Activated CD4-positive, alpha-beta memory T cell treated with anti-CD3 and anti-CD28 coated beads for 36 hours (primary cell): ENCODE measurements at regions of chr10 and their contacts with region 1.

Region 1: GRCh38 chr10:11170993-11171851 is 153.6 kb downstream of the CELF2 start:
- DNase-seq: peak; percentile 83
- H3K4me3 Mint-ChIP-seq: no peak overlapping the region
- H3K27ac Mint-ChIP-seq: no peak overlapping the region
- H3K4me1 Mint-ChIP-seq: peaks cover 39% of the 10 kb centered on the region
- H3K27me3 Mint-ChIP-seq: no peaks in the 10 kb centered on the region

Region 2: GRCh38 chr10:10946801-10947200 is 224.4 kb before region 1 on chr10:
- CTCF ChIA-PET with region 1: no interaction called
- POLR2A ChIA-PET with region 1: no interaction called
- intact Hi-C with region 1: no loop called
- DNase-seq: no peak
- H3K4me3 Mint-ChIP-seq: no peak overlapping the region
- H3K27ac Mint-ChIP-seq: no peak overlapping the region
- H3K4me1 Mint-ChIP-seq: no peaks in the 10 kb centered on the region
- H3K27me3 Mint-ChIP-seq: peaks cover 24% of the 10 kb centered on the region

Region 3: GRCh38 chr10:11113156-11113555 is 58.1 kb before region 1 on chr10:
- CTCF ChIA-PET with region 1: interaction called, 4 read pairs
- POLR2A ChIA-PET with region 1: no interaction called
- intact Hi-C with region 1: loop called (anchors 2 kb)
- DNase-seq: peak; percentile 19
- H3K4me3 Mint-ChIP-seq: no peak overlapping the region
- H3K27ac Mint-ChIP-seq: peak overlapping the region; percentile 10
- H3K4me1 Mint-ChIP-seq: peaks cover 20% of the 10 kb centered on the region
- H3K27me3 Mint-ChIP-seq: no peaks in the 10 kb centered on the region

Region 4: GRCh38 chr10:11218395-11218794 is 47.2 kb after region 1 on chr10:
- CTCF ChIA-PET with region 1: no interaction called
- POLR2A ChIA-PET with region 1: interaction called, 12 read pairs
- intact Hi-C with region 1: no loop called
- DNase-seq: peak; percentile 67
- H3K4me3 Mint-ChIP-seq: peak overlapping the region; percentile 9
- H3K27ac Mint-ChIP-seq: peak overlapping the region; percentile 87
- H3K4me1 Mint-ChIP-seq: peaks cover 74% of the 10 kb centered on the region
- H3K27me3 Mint-ChIP-seq: no peaks in the 10 kb centered on the region

Region 5: DNA sequence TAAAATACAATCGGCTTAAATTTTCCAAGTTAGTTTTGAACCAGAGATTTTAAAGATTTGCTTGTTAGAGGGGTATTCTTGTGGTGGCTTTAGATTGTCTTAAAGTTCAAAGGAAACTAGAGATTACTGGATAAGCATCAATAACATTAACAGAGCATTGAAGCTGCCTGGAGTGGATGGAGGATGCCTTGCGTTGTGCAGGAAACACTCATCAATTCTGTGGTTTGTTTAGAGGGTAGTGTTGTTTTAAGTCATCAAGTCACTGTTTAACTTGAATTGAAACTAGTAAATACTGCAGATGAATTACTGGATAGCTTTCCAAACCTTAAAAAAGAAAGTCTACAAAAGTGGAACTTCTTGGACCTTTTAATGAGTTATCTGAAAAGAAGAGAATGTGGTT is 65.0 kb after region 1 on chr10:
- CTCF ChIA-PET with region 1: interaction called, 6 read pairs
- POLR2A ChIA-PET with region 1: interaction called, 52 read pairs
- intact Hi-C with region 1: loop called (anchors 1 kb)
- DNase-seq: peak; percentile 61
- H3K4me3 Mint-ChIP-seq: peak overlapping the region; percentile 66
- H3K27ac Mint-ChIP-seq: peak overlapping the region; percentile 93
- H3K4me1 Mint-ChIP-seq: peaks cover 97% of the 10 kb centered on the region
- H3K27me3 Mint-ChIP-seq: no peaks in the 10 kb centered on the region

Region 6: DNA sequence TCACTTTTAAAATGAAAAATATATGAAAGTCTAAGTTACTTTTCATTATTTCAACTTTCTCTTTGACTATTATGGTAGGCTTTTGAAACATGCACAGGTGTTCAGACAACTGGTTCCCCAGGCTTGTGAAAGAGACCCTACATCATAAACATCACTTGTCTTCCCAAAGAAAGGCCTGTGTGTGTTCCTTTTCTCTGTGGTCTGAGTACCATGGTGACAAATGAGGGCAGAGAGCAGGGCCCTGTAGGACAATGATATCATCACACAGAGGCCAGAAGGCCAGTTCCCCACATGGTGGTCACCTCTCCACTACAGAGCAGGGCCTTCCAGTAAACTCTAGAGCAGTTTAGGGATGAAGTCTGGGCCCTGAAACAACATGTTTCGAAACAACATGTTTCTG is 151.5 kb after region 1 on chr10:
- CTCF ChIA-PET with region 1: interaction called, 4 read pairs
- POLR2A ChIA-PET with region 1: no interaction called
- intact Hi-C with region 1: loop called (anchors 2 kb)
- DNase-seq: no peak
- H3K4me3 Mint-ChIP-seq: no peak overlapping the region
- H3K27ac Mint-ChIP-seq: peak overlapping the region; percentile 83
- H3K4me1 Mint-ChIP-seq: peaks cover 69% of the 10 kb centered on the region
- H3K27me3 Mint-ChIP-seq: no peaks in the 10 kb centered on the region

Region 7: DNA sequence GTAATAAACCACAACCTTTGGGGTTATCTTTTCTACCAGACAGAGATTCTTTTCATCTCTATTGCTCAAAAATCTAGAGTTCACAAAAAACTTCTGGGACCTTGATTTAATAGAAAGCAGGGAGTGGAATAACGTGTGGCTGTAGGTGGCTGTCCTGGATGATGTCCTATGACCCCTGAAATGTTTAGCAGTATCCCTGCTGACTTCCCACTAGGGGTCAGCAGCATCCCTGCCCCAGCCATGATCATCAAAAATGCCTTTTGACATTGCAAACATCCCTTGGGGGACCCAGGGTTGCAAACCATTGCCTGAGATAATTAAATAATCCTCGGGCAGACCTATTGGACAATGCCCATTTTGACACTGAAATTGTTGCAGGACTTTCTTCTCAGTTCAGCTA is 263.1 kb after region 1 on chr10:
- CTCF ChIA-PET with region 1: no interaction called
- POLR2A ChIA-PET with region 1: no interaction called
- intact Hi-C with region 1: no loop called
- DNase-seq: no peak
- H3K4me3 Mint-ChIP-seq: no peak overlapping the region
- H3K27ac Mint-ChIP-seq: no peak overlapping the region
- H3K4me1 Mint-ChIP-seq: peaks cover 3% of the 10 kb centered on the region
- H3K27me3 Mint-ChIP-seq: no peaks in the 10 kb centered on the region